ENCODE measurements at regions of chr9 and their contacts with region 1.

Region 1: DNA sequence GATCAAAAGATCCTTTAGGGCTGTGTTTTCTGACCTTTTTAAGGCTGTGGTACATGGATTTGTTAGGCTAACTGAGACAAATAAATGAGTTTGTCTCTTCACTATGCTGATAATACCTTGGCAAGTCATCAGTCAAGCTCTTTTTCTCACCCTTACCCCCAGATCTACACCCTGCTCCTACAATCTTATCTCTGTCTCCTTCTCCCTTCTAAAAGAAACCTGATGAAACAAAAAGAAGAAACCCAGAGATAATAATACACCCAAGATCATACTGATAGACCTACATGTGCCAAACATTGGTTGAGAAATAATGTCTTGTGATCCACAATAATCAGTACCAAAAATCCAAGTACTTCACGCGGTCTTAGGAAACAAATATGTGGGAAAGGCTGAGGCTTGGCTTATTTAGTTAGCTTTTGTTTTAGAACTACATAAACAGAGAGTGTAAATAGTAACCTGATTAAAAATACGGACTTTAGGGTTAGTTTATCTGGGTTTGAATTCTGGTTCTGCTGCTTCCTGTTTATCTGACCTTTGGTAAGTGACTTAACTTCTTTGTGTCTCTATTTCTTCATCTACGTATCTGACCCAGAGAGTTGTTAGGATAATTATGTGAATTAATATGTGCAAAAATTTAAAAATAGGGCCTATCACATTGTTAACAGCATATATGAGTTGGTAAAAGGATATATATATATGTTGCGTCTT is 24.8 kb upstream of the PDCD1LG2 start:
- DNase-seq: no peak
- H3K4me3 ChIP-seq: no peak overlapping the region
- H3K27ac ChIP-seq: no peak overlapping the region
- H3K4me1 ChIP-seq: no peaks in the 10 kb centered on the region
- H3K27me3 ChIP-seq: no peaks in the 10 kb centered on the region
- CTCF ChIP-seq: no peak
- EP300 ChIP-seq: no peak
- POLR2A ChIP-seq: no peak

Region 2: DNA sequence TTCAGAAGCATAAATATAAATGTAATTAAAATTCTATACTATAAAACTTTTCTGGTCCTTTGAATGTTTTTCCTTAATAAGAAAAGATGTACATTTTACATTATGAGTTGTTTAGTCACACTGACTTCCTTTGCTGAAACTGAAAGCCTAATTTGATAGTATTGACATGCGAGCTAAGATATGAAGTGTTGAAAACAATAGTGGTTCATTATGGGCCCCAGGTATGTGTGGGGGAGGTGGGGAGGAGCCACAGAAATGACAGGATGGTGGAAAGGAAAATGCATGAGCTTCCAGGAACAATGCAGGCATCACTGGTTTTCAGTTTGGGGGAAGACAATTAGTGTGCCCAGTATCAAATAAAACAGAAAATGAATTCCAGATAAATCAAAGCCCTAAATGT is 110.4 kb before region 1 on chr9:
- intact Hi-C with region 1: no loop called
- DNase-seq: no peak
- H3K4me3 ChIP-seq: no peak overlapping the region
- H3K27ac ChIP-seq: no peak overlapping the region
- H3K4me1 ChIP-seq: peaks cover 2% of the 10 kb centered on the region
- H3K27me3 ChIP-seq: no peaks in the 10 kb centered on the region
- CTCF ChIP-seq: no peak
- EP300 ChIP-seq: no peak
- POLR2A ChIP-seq: no peak

Region 3: GRCh38 chr9:5468850-5469249 is 16.7 kb before region 1 on chr9:
- intact Hi-C with region 1: loop called in 1 of 4 experiments (anchors 2 kb)
- DNase-seq: no peak
- H3K4me3 ChIP-seq: no peak overlapping the region
- H3K27ac ChIP-seq: no peak overlapping the region
- H3K4me1 ChIP-seq: no peaks in the 10 kb centered on the region
- H3K27me3 ChIP-seq: no peaks in the 10 kb centered on the region
- CTCF ChIP-seq: no peak
- EP300 ChIP-seq: no peak
- POLR2A ChIP-seq: no peak

Measured in ovary (tissue), 10 donors.